Breast epithelium (tissue), 4 donors: ENCODE measurements at regions of chr12 and their contacts with region 1.

Region 1: DNA sequence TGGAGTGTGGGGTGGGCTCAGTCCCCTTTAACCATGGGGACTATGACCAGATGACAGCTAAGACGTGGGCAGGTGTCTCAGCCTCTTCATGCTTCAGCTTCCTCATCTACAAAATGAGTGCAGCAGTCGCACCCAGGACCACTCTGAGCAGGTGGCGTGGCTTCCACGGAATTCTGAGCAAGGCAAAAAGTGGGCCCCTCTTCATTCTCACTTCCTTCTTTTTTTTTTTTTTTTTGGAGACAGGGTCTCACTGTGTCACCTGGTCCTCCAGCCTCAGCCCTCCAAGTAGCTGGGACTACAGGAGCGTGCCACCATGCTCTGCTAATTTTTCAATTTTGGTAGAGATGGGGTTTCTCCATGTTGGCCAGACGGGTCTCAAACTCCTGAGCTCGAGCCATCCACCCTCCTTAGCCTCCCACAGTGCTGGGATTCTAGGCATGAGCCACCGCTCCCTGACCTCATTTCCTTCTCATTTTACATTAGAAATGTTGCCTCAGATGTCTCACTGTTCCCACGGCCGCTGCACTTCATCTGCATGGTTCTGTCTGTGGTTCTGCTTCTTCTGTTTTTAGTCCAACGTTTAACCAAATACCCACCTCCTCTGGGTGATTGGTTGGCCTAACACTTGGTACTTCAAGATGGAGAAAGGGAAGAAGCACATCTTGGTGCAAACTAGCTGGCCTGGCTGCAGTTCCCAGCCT is 41.3 kb upstream of the BCL7A start:
- DNase-seq: no peak
- H3K4me3 ChIP-seq: no peak overlapping the region
- H3K27ac ChIP-seq: no peak overlapping the region
- H3K4me1 ChIP-seq: no peaks in the 10 kb centered on the region
- H3K27me3 ChIP-seq: no peaks in the 10 kb centered on the region
- CTCF ChIP-seq: no peak
- POLR2A ChIP-seq: no peak

Region 2: GRCh38 chr12:122437656-122438121 is 457.3 kb after region 1 on chr12:
- intact Hi-C with region 1: loop called (anchors 5 kb)
- DNase-seq: peak in 1 of 2 donors; percentile 47
- H3K4me3 ChIP-seq: peak overlapping the region in 1 of 3 donors; percentile 0
- H3K27ac ChIP-seq: peak overlapping the region; percentile 23 to 54
- H3K4me1 ChIP-seq: no peaks in the 10 kb centered on the region
- H3K27me3 ChIP-seq: no peaks in the 10 kb centered on the region
- CTCF ChIP-seq: no peak
- POLR2A ChIP-seq: no peak